ENCODE measurements at regions of chr15 and their contacts with region 1.

Region 1: DNA sequence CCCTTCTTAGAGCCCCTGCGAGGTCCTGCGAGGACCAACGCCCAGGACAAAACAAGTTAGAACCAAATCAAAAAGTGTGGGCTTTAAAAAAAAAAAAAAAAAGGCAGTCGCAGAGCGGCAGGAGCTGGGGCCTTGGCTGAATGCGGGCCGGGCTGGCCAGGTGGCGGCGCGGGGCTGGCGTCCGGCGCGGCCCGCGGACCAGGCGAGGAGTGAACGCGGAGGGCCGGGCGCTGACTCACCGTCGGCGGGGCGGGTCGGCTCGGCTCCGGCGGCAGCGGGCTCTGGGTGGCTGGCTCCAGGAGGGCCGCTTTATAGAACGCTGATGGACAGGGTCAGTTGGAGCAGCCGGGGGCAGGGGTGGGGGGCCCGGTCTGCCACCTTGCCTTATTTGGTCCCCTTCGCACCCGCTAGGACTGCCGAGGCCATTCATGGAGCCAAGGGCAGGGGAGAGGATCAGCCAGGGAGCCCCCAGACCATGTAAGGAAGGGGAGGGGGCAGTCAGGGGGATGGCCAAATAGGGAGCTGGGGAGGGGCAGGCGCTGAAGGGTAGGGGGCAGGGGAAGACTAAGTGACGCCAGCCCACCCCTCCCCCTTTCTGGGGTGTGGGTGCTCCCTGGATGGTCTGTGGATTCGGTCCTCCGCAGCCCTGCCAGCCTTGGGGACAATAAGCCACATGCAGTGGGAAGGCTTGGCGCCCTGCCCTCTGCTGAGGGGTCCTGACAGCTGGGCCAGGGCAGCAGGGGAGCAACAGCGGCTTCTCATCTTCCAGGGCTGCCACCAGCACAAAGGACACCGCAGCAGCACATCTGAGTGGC is at the start of gene ACTC1:
- DNase-seq: no peak
- ATAC-seq: no peak
- H3K4me3 ChIP-seq: no peak within 1 kb of the TSS
- H3K4me3 Mint-ChIP-seq: no peak within 1 kb of the TSS
- H3K27ac ChIP-seq: no peak within 1 kb of the TSS
- H3K27ac Mint-ChIP-seq: no peak within 1 kb of the TSS
- H3K4me1 ChIP-seq: no peaks in the 10 kb centered on the region
- H3K4me1 Mint-ChIP-seq: no peaks in the 10 kb centered on the region
- H3K27me3 ChIP-seq: peaks cover 0 to 30% (median 9%) of the 10 kb centered on the region in 4 experiments
- H3K27me3 Mint-ChIP-seq: peaks cover 62% of the 10 kb centered on the region
- CTCF ChIP-seq: no peak
- total RNA-seq, gene ACTC1: not detected in 2 replicates

Region 2: GRCh38 chr15:34101366-34102175 is 693.9 kb before region 1 on chr15 and contains the starts of genes EMC7 and PGBD4:
- CTCF ChIA-PET with region 1: no interaction called
- POLR2A ChIA-PET with region 1: no interaction called
- intact Hi-C with region 1: no loop called
- DNase-seq: peak; percentile 99
- ATAC-seq: peak; percentile 99
- H3K4me3 ChIP-seq: peak within 1 kb of the TSS; percentile 80 to 99 (median 82)
- H3K4me3 Mint-ChIP-seq: peak within 1 kb of the TSS; percentile 98
- H3K27ac ChIP-seq: peak within 1 kb of the TSS; percentile 92 to 98
- H3K27ac Mint-ChIP-seq: peak within 1 kb of the TSS; percentile 99
- H3K4me1 ChIP-seq: peaks cover 18 to 19% of the 10 kb centered on the region in 2 donors
- H3K4me1 Mint-ChIP-seq: peaks cover 41% of the 10 kb centered on the region
- H3K27me3 ChIP-seq: no peaks in the 10 kb centered on the region
- H3K27me3 Mint-ChIP-seq: no peaks in the 10 kb centered on the region
- CTCF ChIP-seq: no peak
- total RNA-seq, gene EMC7: 28.8 and 29.9 TPM in 2 replicates
- total RNA-seq, gene PGBD4: 5.2 and 5.6 TPM in 2 replicates

Region 3: GRCh38 chr15:34855397-34855796 is 59.9 kb after region 1 on chr15:
- CTCF ChIA-PET with region 1: no interaction called
- POLR2A ChIA-PET with region 1: no interaction called
- intact Hi-C with region 1: loop called (anchors 10 kb)
- DNase-seq: no peak
- ATAC-seq: no peak
- H3K4me3 ChIP-seq: no peak overlapping the region
- H3K4me3 Mint-ChIP-seq: no peak overlapping the region
- H3K27ac ChIP-seq: no peak overlapping the region
- H3K27ac Mint-ChIP-seq: peak overlapping the region; percentile 61
- H3K4me1 ChIP-seq: peaks cover 3 to 15% of the 10 kb centered on the region in 2 donors
- H3K4me1 Mint-ChIP-seq: peaks cover 30% of the 10 kb centered on the region
- H3K27me3 ChIP-seq: no peaks in the 10 kb centered on the region
- H3K27me3 Mint-ChIP-seq: no peaks in the 10 kb centered on the region
- CTCF ChIP-seq: no peak